ENCODE measurements at regions of chr1 and their contacts with region 1.

Region 1: DNA sequence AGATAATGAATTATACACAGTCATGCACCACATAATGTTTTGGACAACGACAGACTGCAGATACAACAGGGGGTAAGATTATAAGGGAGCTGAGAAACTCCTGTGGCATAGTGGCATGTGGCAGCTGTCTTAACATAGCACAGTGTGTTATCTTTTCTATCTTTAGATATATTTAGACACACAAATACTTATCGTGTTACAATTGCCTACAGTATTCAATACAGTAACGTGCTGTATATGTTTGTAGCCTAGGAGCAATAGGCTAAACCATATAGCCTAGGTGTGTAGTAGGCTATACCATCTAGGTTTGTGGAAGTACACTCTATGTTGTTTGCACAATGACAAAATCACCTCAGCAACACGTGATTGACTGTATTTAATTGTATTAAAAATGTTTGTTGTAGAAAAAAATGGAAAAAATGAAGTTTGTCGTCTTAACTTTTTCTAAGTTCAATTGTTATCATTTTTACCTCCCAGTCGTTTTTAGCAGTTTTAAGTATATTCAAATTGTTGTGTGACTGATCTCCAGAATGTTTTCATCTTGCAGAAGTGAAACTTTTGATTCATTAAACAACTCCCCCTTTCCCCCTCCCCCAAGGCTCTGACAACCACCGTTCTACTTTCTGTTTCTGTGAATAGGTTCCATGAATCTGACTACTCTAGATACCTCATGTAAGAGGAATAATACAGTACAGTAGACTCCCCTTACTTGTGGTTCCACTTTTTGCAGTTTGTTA is 351.0 kb upstream of the B3GALT2 start:
- DNase-seq: peak; percentile 61
- H3K4me3 Mint-ChIP-seq: peak overlapping the region; percentile 22
- H3K27ac Mint-ChIP-seq: peak overlapping the region; percentile 78
- H3K4me1 Mint-ChIP-seq: peaks cover 55% of the 10 kb centered on the region
- H3K27me3 Mint-ChIP-seq: no peaks in the 10 kb centered on the region

Region 2: GRCh38 chr1:192516776-192517297 is 1020.6 kb before region 1 on chr1:
- intact Hi-C with region 1: loop called (anchors 1 kb)
- DNase-seq: peak; percentile 67
- H3K4me3 Mint-ChIP-seq: peak overlapping the region; percentile 79
- H3K27ac Mint-ChIP-seq: peak overlapping the region; percentile 92
- H3K4me1 Mint-ChIP-seq: peaks cover 58% of the 10 kb centered on the region
- H3K27me3 Mint-ChIP-seq: peaks cover 4% of the 10 kb centered on the region

Region 3: GRCh38 chr1:193121616-193122593 is 415.5 kb before region 1 on chr1 and contains the start of gene CDC73:
- intact Hi-C with region 1: loop called (anchors 2 kb)
- DNase-seq: peak; percentile 97
- H3K4me3 Mint-ChIP-seq: peak within 1 kb of the TSS; percentile 92
- H3K27ac Mint-ChIP-seq: peak within 1 kb of the TSS; percentile 88
- H3K4me1 Mint-ChIP-seq: peaks cover 62% of the 10 kb centered on the region
- H3K27me3 Mint-ChIP-seq: peaks cover 15% of the 10 kb centered on the region
- total RNA-seq, gene CDC73: 56.1 and 57.3 TPM in 2 replicates

Region 4: DNA sequence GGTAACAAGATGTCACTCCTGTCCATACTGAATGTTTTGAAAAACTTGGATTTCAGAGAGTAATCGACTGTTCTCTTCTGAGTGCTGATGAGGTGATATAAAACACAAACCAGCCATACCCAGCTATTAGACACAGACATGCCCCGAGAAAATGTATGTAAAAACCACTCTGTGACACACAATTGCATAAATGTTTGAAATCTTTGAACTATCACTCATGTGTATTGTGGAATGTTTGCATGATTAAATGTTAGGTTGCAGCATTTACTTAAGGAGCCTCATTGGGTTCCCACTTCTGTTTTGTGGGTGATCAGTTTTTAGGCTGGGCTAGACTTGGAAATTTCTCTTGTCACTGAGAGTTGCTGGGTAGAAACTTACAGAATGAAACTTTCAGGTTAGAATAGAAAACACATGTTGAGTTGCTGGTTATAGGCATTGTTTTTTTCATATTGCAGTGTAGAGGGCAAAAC is 80.6 kb before region 1 on chr1:
- intact Hi-C with region 1: loop called (anchors 1 kb)
- DNase-seq: no peak
- H3K4me3 Mint-ChIP-seq: no peak overlapping the region
- H3K27ac Mint-ChIP-seq: no peak overlapping the region
- H3K4me1 Mint-ChIP-seq: peaks cover 25% of the 10 kb centered on the region
- H3K27me3 Mint-ChIP-seq: no peaks in the 10 kb centered on the region

Region 5: DNA sequence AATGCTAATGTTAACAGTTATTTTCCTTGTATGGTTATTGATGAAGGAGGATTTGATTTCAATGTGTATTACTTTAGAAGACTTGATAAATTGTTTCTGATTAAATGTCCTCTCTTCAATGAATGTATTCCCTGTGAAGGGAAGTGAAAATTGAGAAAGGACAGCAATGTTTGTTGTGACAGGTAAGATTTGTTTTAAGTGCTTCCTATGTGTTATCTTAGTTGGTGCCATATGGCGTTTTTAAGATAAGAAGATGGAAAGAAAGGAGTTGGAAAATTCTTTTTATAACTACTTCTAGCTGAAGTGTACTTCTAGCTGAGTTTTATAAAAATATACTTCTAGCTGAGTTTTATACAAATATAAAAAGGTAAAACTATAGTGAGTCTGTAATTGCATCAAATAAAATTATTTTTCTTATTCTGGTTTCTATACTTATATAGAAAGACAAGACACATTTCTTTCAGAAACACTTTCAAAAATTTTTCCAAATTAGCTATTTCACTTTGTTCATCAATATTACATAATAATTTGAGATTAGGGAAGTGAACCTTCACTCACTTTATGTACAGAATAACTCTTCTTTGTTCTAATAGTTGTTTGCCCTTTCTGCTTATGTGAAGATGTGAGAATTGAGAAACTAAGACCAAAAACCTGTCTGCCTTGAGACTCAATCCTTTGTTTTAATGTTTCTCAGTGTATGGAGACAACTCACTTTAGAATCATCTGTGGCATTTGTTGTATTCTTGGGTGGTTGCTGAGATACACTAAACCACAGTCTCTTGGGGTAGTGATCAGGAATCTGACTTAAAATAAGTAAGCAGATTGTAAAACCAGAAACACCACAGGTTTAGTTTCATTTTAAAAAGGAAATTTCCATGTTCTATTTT is 31.9 kb after region 1 on chr1:
- intact Hi-C with region 1: loop called (anchors 1 kb)
- DNase-seq: peak; percentile 26
- H3K4me3 Mint-ChIP-seq: peak overlapping the region; percentile 25
- H3K27ac Mint-ChIP-seq: peak overlapping the region; percentile 81
- H3K4me1 Mint-ChIP-seq: peaks cover 36% of the 10 kb centered on the region
- H3K27me3 Mint-ChIP-seq: no peaks in the 10 kb centered on the region

Region 6: GRCh38 chr1:194295685-194296084 is 758.3 kb after region 1 on chr1:
- intact Hi-C with region 1: loop called (anchors 10 kb)
- DNase-seq: peak; percentile 12
- H3K4me3 Mint-ChIP-seq: no peak overlapping the region
- H3K27ac Mint-ChIP-seq: no peak overlapping the region
- H3K4me1 Mint-ChIP-seq: peaks cover 18% of the 10 kb centered on the region
- H3K27me3 Mint-ChIP-seq: no peaks in the 10 kb centered on the region

Measured in activated T-helper 1 cell treated with anti-CD3 and anti-CD28 coated beads, Interleukin-12 subunit alpha, Interleukin-12 subunit beta, Interleukin-2, Interleukin-4 antibody, amounts not matched to agents 30 ng/mL and 10 ng/mL and 1 ng/mL, durations not matched to agents 14 hours and 24 hours and 36 hours (primary cell).